ENCODE measurements at regions of chr19 and their contacts with region 1.

Region 1: DNA sequence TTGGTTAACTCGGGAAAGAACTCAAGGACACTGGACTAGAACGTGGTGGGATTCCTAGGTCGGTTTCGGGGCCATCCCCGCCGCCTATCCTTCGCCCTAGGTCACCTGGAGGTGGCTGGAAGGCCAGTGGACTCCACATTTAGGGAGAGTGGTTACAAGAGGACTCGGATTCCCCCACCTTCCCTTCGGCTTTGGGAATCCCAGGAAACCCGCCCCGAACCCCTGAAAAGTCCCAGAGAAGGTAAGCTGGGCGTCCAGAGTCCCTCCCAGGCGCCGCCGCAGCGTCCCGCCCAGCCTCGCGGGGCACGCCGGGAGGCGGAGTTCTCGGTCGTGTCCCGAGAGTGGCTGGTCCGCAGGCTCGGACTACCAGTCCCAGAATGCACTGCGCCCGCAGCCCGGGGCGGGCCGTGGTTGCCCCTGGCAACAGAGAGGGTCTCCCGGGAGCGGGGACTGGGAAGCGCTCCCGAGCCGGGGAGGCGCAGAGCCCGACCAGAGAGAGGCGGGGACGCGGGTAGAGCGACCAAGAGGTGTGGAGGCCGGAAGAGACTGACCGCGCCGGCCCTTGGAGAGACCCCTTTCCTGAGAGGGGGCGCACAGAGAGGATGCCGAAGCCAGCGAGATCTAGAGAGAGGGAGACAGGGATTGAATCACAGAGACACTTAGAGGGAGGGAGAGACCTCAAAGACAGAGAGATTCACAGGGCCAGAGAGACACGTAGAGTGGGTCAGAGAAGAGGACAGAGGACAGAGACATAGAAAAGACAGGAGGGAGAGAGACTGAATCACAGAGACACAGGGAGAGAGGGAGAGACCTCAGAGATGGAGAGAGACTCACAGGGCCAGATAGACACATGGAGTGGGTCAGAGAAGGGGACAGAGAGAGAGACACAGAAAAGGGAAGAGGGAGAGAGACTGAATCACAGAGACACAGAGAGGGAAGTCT is 2.6 kb upstream of the PRKCG start:
- DNase-seq: peak; percentile 84
- H3K4me3 Mint-ChIP-seq: no peak overlapping the region
- H3K27ac Mint-ChIP-seq: no peak overlapping the region
- H3K4me1 Mint-ChIP-seq: peaks cover 43% of the 10 kb centered on the region
- H3K27me3 Mint-ChIP-seq: peaks cover 13% of the 10 kb centered on the region

Region 2: GRCh38 chr19:53849237-53849676 is 30.2 kb before region 1 on chr19:
- intact Hi-C with region 1: loop called (anchors 2 kb)
- DNase-seq: no peak
- H3K4me3 Mint-ChIP-seq: no peak overlapping the region
- H3K27ac Mint-ChIP-seq: no peak overlapping the region
- H3K4me1 Mint-ChIP-seq: peaks cover 20% of the 10 kb centered on the region
- H3K27me3 Mint-ChIP-seq: peaks cover 20% of the 10 kb centered on the region

Region 3: GRCh38 chr19:53927739-53928138 is 48.3 kb after region 1 on chr19:
- intact Hi-C with region 1: no loop called
- DNase-seq: peak; percentile 14
- H3K4me3 Mint-ChIP-seq: no peak overlapping the region
- H3K27ac Mint-ChIP-seq: no peak overlapping the region
- H3K4me1 Mint-ChIP-seq: no peaks in the 10 kb centered on the region
- H3K27me3 Mint-ChIP-seq: no peaks in the 10 kb centered on the region